Activated CD4-positive, alpha-beta memory T cell treated with anti-CD3 and anti-CD28 coated beads for 36 hours (primary cell): ENCODE measurements at regions of chr9 and their contacts with region 1.

Region 1: GRCh38 chr9:126745574-126746411 is 59.0 kb upstream of the ZBTB43 start:
- DNase-seq: peak; percentile 30
- H3K4me3 Mint-ChIP-seq: no peak overlapping the region
- H3K27ac Mint-ChIP-seq: no peak overlapping the region
- H3K4me1 Mint-ChIP-seq: peaks cover 25% of the 10 kb centered on the region
- H3K27me3 Mint-ChIP-seq: peaks cover 2% of the 10 kb centered on the region

Region 2: GRCh38 chr9:126146254-126147145 is 599.3 kb before region 1 on chr9:
- CTCF ChIA-PET with region 1: no interaction called
- POLR2A ChIA-PET with region 1: no interaction called
- intact Hi-C with region 1: no loop called
- DNase-seq: peak; percentile 30
- H3K4me3 Mint-ChIP-seq: no peak overlapping the region
- H3K27ac Mint-ChIP-seq: no peak overlapping the region
- H3K4me1 Mint-ChIP-seq: peaks cover 2% of the 10 kb centered on the region
- H3K27me3 Mint-ChIP-seq: peaks cover 25% of the 10 kb centered on the region

Region 3: DNA sequence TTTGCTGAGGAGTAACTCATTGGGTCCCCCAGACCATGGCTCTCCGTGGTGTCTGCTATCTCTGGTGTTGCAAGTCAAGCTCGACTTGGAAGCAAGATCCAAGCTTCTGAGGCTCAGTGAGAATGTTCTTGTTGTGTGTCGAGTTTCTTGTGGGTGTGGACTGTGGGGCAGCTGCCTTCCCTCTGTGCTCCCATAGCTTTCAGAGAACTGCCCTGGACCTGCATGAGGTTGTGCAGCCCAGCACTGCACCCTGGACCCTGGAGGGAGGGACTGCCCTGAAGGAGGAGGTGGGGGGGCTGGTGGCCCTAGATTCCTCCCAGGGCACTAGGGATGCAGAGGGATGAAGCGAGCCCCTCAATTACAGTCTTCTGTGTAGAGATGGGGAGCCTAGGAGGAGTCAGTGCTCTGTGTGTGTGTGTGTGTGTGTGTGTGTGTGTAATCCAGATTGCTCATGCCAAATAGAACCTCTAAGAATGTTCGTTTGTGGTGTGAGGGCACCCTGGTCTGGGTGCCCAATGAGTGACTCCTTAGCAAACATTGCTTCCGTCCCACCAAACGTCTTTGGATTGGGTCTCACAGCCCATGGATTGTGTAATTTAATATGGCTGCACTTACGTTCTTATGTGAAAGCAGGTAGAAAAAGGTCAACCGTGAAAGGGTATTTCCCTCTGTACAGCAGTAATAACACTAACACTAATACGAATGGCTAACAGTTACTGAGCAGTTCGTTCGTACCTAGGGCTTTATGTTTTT is 275.4 kb before region 1 on chr9:
- CTCF ChIA-PET with region 1: no interaction called
- POLR2A ChIA-PET with region 1: no interaction called
- intact Hi-C with region 1: no loop called
- DNase-seq: peak; percentile 33
- H3K4me3 Mint-ChIP-seq: no peak overlapping the region
- H3K27ac Mint-ChIP-seq: peak overlapping the region; percentile 49
- H3K4me1 Mint-ChIP-seq: peaks cover 48% of the 10 kb centered on the region
- H3K27me3 Mint-ChIP-seq: peaks cover 7% of the 10 kb centered on the region

Region 4: GRCh38 chr9:126722252-126723078 is 23.3 kb before region 1 on chr9:
- CTCF ChIA-PET with region 1: no interaction called
- POLR2A ChIA-PET with region 1: interaction called, 7 read pairs
- intact Hi-C with region 1: loop called (anchors 2 kb)
- DNase-seq: peak; percentile 94
- H3K4me3 Mint-ChIP-seq: peak overlapping the region; percentile 80
- H3K27ac Mint-ChIP-seq: peak overlapping the region; percentile 89
- H3K4me1 Mint-ChIP-seq: peaks cover 37% of the 10 kb centered on the region
- H3K27me3 Mint-ChIP-seq: no peaks in the 10 kb centered on the region